CD8-positive, alpha-beta memory T cell (primary cell): ENCODE measurements at regions of chr1 and their contacts with region 1.

Region 1: DNA sequence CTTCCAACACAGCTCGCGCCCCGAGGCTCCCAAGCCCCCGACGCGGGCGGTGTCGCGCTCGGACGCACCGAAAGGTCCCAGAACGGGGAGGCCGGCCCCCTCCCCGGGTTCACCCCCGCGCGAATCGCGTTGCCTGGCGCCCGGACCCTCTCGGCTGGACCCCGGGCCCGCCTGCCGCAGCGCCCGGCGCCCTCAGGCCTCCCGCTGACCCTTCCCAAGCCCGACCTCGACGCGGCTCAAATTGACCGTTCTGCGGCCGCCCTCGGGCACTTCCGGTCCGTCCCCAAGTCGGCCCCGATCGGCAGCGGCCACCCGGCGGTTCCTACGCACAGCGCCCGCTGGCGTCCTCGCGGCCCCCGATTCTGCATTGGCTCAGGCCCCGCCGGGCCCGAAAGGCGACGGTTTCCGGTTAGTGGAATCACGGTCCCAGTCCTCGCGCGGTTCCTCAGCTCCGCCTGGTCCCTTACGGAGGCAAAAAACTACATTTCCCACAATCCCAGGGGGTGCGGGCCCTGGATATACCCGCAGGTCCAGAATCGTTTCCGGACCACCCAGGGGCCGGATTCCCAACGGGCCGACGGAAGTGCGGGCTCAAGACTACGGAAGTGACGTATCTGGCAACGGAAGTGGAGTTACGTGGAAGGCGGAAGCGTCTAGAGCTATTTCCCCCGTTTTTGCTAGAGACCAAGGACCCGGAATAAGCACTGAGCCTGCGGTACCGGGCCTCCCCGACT is at the start of gene AURKAIP1:
- DNase-seq: peak; percentile 90 to 98 (median 97)
- H3K4me3 ChIP-seq: peak within 1 kb of the TSS; percentile 82
- H3K4me3 Mint-ChIP-seq: peak within 1 kb of the TSS; percentile 88 to 96 (median 91)
- H3K27ac ChIP-seq: peak within 1 kb of the TSS; percentile 91
- H3K27ac Mint-ChIP-seq: peak within 1 kb of the TSS; percentile 92 to 98 (median 96)
- H3K4me1 ChIP-seq: peaks cover 37% of the 10 kb centered on the region
- H3K4me1 Mint-ChIP-seq: peaks cover 15 to 46% (median 18%) of the 10 kb centered on the region in 3 donors
- H3K27me3 ChIP-seq: no peaks in the 10 kb centered on the region
- H3K27me3 Mint-ChIP-seq: no peaks in the 10 kb centered on the region
- total RNA-seq, gene AURKAIP1: 159 to 169 TPM

Region 2: GRCh38 chr1:1115786-1116700 is 259.1 kb before region 1 on chr1 and contains the start of gene C1orf159:
- CTCF ChIA-PET with region 1: interaction called, 57 read pairs
- POLR2A ChIA-PET with region 1: interaction called, 10 read pairs
- DNase-seq: peak; percentile 97 to 98 (median 98)
- H3K4me3 ChIP-seq: peak within 1 kb of the TSS; percentile 43
- H3K4me3 Mint-ChIP-seq: peak within 1 kb of the TSS; percentile 83 to 96 (median 86)
- H3K27ac ChIP-seq: peak within 1 kb of the TSS; percentile 43
- H3K27ac Mint-ChIP-seq: peak within 1 kb of the TSS in 7 of 8 donors; percentile 57 to 94 (median 72)
- H3K4me1 ChIP-seq: no peaks in the 10 kb centered on the region
- H3K4me1 Mint-ChIP-seq: peaks cover 6 to 14% (median 11%) of the 10 kb centered on the region in 3 donors
- H3K27me3 ChIP-seq: peaks cover 6% of the 10 kb centered on the region
- H3K27me3 Mint-ChIP-seq: peaks cover 6 to 9% of the 10 kb centered on the region in 2 donors
- total RNA-seq, gene C1orf159: 18.7 to 20.8 TPM

Region 3: GRCh38 chr1:1122078-1122811 is 252.9 kb before region 1 on chr1:
- CTCF ChIA-PET with region 1: interaction called, 57 read pairs
- POLR2A ChIA-PET with region 1: interaction called, 10 read pairs
- DNase-seq: peak; percentile 75 to 87 (median 75)
- H3K4me3 ChIP-seq: peak overlapping the region; percentile 43
- H3K4me3 Mint-ChIP-seq: peak overlapping the region in 1 of 7 donors; percentile 13
- H3K27ac ChIP-seq: no peak overlapping the region
- H3K27ac Mint-ChIP-seq: no peak overlapping the region
- H3K4me1 ChIP-seq: peaks cover 11% of the 10 kb centered on the region
- H3K4me1 Mint-ChIP-seq: peaks cover 0 to 3% (median 0%) of the 10 kb centered on the region in 3 donors
- H3K27me3 ChIP-seq: peaks cover 5% of the 10 kb centered on the region
- H3K27me3 Mint-ChIP-seq: peaks cover 6 to 9% of the 10 kb centered on the region in 2 donors

Region 4: DNA sequence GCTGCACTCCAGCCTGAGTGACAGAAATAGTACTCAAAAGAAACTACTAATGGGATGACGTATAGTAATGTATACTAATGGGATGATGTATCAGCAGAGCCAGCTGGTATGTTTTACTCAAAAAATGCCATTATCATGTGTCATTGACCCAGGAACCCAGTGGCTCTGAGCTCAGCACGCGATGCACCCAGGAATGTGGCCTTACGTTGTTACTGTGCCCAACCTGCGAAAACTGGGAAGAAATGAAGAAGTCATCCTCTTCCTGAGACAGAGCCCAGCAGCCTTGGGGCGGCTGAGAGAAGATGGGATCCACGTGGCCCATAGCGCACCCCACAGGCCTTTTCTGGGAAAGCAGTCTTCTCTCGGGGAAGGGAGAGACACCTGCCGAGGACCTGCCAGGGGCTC is 110.2 kb before region 1 on chr1:
- CTCF ChIA-PET with region 1: no interaction called
- POLR2A ChIA-PET with region 1: no interaction called
- DNase-seq: peak in 1 of 5 donors; percentile 22
- H3K4me3 ChIP-seq: no peak overlapping the region
- H3K4me3 Mint-ChIP-seq: no peak overlapping the region
- H3K27ac ChIP-seq: no peak overlapping the region
- H3K27ac Mint-ChIP-seq: no peak overlapping the region
- H3K4me1 ChIP-seq: peaks cover 3% of the 10 kb centered on the region
- H3K4me1 Mint-ChIP-seq: peaks cover 17 to 36% (median 22%) of the 10 kb centered on the region in 3 donors
- H3K27me3 ChIP-seq: no peaks in the 10 kb centered on the region
- H3K27me3 Mint-ChIP-seq: no peaks in the 10 kb centered on the region

Region 5: GRCh38 chr1:1305300-1306069 is 69.6 kb before region 1 on chr1:
- CTCF ChIA-PET with region 1: interaction called, 12 read pairs
- POLR2A ChIA-PET with region 1: no interaction called
- DNase-seq: peak; percentile 63 to 87 (median 66)
- H3K4me3 ChIP-seq: peak overlapping the region; percentile 62
- H3K4me3 Mint-ChIP-seq: peak overlapping the region; percentile 84 to 93 (median 87)
- H3K27ac ChIP-seq: peak overlapping the region; percentile 72
- H3K27ac Mint-ChIP-seq: peak overlapping the region in 7 of 8 donors; percentile 73 to 94 (median 85)
- H3K4me1 ChIP-seq: peaks cover 39% of the 10 kb centered on the region
- H3K4me1 Mint-ChIP-seq: peaks cover 15 to 38% (median 17%) of the 10 kb centered on the region in 3 donors
- H3K27me3 ChIP-seq: no peaks in the 10 kb centered on the region
- H3K27me3 Mint-ChIP-seq: no peaks in the 10 kb centered on the region

Region 6: DNA sequence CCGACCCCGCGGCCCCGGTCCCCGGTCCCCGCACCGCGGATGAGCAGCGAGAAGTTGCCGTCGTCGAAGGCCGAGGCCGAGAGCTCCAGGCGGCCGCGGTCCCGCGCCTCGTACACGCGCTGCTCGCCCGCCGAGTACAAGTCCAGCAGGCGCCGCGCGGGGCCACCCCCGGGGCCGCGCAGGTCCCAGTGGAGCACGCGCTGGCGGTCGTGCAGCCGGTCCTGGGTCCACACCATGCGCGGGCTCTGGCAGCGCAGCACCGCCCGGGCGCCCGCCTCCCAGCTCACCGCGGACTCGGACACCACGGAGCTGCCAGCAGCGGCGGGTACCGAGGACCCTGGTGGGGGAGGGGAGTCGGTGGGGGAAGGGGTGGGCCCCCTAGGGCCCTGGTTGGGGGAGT is 19.7 kb before region 1 on chr1:
- CTCF ChIA-PET with region 1: interaction called, 19 read pairs
- POLR2A ChIA-PET with region 1: interaction called, 4 read pairs
- DNase-seq: no peak
- H3K4me3 ChIP-seq: no peak overlapping the region
- H3K4me3 Mint-ChIP-seq: no peak overlapping the region
- H3K27ac ChIP-seq: no peak overlapping the region
- H3K27ac Mint-ChIP-seq: no peak overlapping the region
- H3K4me1 ChIP-seq: peaks cover 23% of the 10 kb centered on the region
- H3K4me1 Mint-ChIP-seq: peaks cover 8 to 40% (median 14%) of the 10 kb centered on the region in 3 donors
- H3K27me3 ChIP-seq: peaks cover 4% of the 10 kb centered on the region
- H3K27me3 Mint-ChIP-seq: peaks cover 5 to 26% of the 10 kb centered on the region in 2 donors

Region 7: DNA sequence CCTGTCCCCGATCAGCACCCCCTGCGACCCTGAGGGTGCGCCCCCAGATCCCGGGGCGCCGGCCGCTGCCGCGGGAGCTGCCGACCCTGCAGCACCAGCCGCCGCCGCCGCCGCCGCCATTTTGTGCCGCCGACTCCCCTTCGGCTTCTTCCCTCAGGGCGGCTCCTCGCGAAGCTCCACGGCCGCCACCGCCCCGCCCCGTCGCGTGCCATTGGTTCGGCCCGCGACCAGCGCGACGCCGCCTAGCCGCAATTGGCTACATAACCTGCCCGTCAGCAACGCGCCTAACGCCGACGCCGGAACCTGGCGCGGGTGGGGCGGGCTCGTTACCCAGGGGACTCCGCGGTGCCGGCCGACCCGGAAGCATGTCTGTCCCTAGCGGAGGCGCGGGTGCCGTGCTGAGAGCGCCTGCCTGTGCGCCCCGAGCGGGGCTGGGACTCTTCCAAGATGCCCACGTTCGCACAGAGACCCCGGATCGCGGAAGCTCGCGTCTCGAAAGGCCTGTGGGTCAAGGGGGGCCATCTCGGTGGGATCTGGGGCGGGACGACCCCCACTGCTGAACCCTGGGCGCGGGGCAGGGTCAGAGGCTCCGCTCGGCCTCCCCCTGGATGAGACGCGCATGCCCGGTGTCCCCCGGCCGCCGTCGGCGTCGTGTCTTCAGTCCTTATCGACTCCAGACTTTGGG is 24.2 kb after region 1 on chr1 and contains the start of gene CCNL2:
- CTCF ChIA-PET with region 1: interaction called, 21 read pairs
- POLR2A ChIA-PET with region 1: interaction called, 48 read pairs
- DNase-seq: peak; percentile 99 to 100 (median 99)
- H3K4me3 ChIP-seq: peak within 1 kb of the TSS; percentile 94
- H3K4me3 Mint-ChIP-seq: peak within 1 kb of the TSS; percentile 88 to 97 (median 90)
- H3K27ac ChIP-seq: peak within 1 kb of the TSS; percentile 89
- H3K27ac Mint-ChIP-seq: peak within 1 kb of the TSS; percentile 84 to 98 (median 93)
- H3K4me1 ChIP-seq: peaks cover 33% of the 10 kb centered on the region
- H3K4me1 Mint-ChIP-seq: peaks cover 33 to 59% (median 42%) of the 10 kb centered on the region in 3 donors
- H3K27me3 ChIP-seq: no peaks in the 10 kb centered on the region
- H3K27me3 Mint-ChIP-seq: peaks cover 0 to 5% of the 10 kb centered on the region in 2 donors
- total RNA-seq, gene CCNL2: 119 to 124 TPM

Region 8: DNA sequence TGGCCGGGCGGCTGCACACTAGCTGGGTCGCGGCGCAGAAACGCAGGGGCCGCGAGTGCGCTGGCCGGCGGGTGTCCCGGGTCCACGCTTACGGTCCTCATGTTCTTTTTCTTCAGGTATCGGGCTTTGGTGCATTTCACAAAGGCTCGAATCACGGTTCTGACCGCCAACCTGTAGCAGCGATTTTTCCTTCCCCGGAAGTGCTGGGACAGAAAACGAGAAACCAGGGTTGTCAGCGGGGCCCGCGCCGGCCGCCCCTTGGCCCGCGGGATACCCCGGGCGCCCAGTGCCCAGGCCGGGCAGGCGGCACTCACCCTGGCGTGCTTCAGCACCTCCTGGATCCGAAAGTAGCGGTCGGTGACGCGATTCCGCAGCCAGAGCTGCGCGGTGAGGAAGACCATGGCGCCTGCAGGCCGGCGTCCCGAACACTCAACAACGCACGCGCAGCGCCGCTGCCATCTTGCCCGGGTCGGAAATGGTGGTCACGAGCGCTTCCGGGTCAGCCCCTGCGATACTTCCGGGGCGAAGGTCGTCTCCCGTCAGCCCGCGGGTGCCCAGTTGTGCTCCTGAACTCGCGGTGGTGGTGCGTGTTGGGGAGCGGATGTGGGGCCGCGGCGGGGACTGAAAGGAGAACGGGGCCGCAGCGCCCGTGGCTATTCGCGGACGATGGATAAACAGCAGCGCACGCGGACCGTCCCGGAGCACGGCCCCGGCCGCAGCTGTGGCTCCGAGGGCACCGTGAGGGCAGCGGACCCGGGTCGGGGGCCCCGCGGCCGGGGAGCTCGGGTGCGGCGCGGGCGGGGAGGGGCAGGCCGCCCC is 31.9 kb after region 1 on chr1 and contains the start of gene MRPL20:
- CTCF ChIA-PET with region 1: interaction called, 5 read pairs
- POLR2A ChIA-PET with region 1: interaction called, 16 read pairs
- DNase-seq: peak; percentile 94 to 97 (median 95)
- H3K4me3 ChIP-seq: peak within 1 kb of the TSS; percentile 94
- H3K4me3 Mint-ChIP-seq: peak within 1 kb of the TSS; percentile 90 to 97 (median 93)
- H3K27ac ChIP-seq: peak within 1 kb of the TSS; percentile 96
- H3K27ac Mint-ChIP-seq: peak within 1 kb of the TSS; percentile 78 to 97 (median 92)
- H3K4me1 ChIP-seq: peaks cover 39% of the 10 kb centered on the region
- H3K4me1 Mint-ChIP-seq: peaks cover 29 to 50% (median 36%) of the 10 kb centered on the region in 3 donors
- H3K27me3 ChIP-seq: no peaks in the 10 kb centered on the region
- H3K27me3 Mint-ChIP-seq: no peaks in the 10 kb centered on the region
- total RNA-seq, gene MRPL20: 206 to 208 TPM